A673 (cell line): ENCODE measurements at regions of chr19 and their contacts with region 1.

Region 1: DNA sequence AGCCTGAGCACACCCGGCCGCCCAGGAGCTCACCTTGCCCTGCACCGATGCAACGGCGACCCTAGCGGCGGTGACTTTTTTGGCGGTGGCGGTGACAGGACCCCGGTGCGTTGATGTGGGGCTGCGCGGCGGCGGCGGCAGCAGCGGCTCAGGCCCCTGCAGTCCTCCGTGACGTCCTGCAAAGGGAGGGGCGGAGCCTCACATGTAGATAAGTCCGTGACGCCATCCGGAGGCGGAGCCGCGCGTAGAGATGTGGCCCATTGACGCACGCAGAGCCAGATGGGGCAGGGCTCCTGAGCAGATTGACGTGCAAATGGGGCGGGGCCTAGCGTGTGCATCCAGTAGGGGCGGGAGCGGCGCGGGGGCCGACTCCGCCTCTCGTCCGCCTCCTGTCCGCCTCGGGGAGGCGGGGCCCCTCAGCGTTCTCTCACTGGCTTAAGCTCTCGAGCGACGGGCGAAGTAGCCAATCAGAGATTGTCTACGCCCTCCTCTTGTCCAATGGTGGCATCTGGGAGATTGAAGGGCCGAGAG is at the start of gene RAB3A:
- DNase-seq: peak; percentile 100
- H3K4me3 ChIP-seq: peak within 1 kb of the TSS; percentile 60
- H3K27ac ChIP-seq: peak within 1 kb of the TSS; percentile 86
- H3K4me1 ChIP-seq: peaks cover 12% of the 10 kb centered on the region
- H3K27me3 ChIP-seq: no peaks in the 10 kb centered on the region
- CTCF ChIP-seq: no peak
- total RNA-seq, gene RAB3A: 2.9 and 4.2 TPM in 2 replicates

Region 2: GRCh38 chr19:17035842-17036424 is 1168.0 kb before region 1 on chr19:
- CTCF ChIA-PET with region 1: interaction called, 14 read pairs
- POLR2A ChIA-PET with region 1: no interaction called
- intact Hi-C with region 1: no loop called
- DNase-seq: peak; percentile 55
- H3K4me3 ChIP-seq: no peak overlapping the region
- H3K27ac ChIP-seq: no peak overlapping the region
- H3K4me1 ChIP-seq: no peaks in the 10 kb centered on the region
- H3K27me3 ChIP-seq: peaks cover 4% of the 10 kb centered on the region
- CTCF ChIP-seq: no peak

Region 3: GRCh38 chr19:18251587-18252369 is 47.9 kb after region 1 on chr19:
- CTCF ChIA-PET with region 1: interaction called, 45 read pairs
- POLR2A ChIA-PET with region 1: no interaction called
- intact Hi-C with region 1: loop called (anchors 2 kb)
- DNase-seq: peak; percentile 80
- H3K4me3 ChIP-seq: no peak overlapping the region
- H3K27ac ChIP-seq: no peak overlapping the region
- H3K4me1 ChIP-seq: no peaks in the 10 kb centered on the region
- H3K27me3 ChIP-seq: peaks cover 6% of the 10 kb centered on the region
- CTCF ChIP-seq: peak; percentile 98

Region 4: GRCh38 chr19:18322759-18323460 is 119.0 kb after region 1 on chr19 and contains the start of gene LSM4:
- CTCF ChIA-PET with region 1: no interaction called
- POLR2A ChIA-PET with region 1: no interaction called
- intact Hi-C with region 1: loop called (anchors 5 kb)
- DNase-seq: peak; percentile 99
- H3K4me3 ChIP-seq: peak within 1 kb of the TSS; percentile 70
- H3K27ac ChIP-seq: peak within 1 kb of the TSS; percentile 92
- H3K4me1 ChIP-seq: peaks cover 11% of the 10 kb centered on the region
- H3K27me3 ChIP-seq: no peaks in the 10 kb centered on the region
- CTCF ChIP-seq: no peak
- total RNA-seq, gene LSM4: 252 and 262 TPM in 2 replicates

Region 5: DNA sequence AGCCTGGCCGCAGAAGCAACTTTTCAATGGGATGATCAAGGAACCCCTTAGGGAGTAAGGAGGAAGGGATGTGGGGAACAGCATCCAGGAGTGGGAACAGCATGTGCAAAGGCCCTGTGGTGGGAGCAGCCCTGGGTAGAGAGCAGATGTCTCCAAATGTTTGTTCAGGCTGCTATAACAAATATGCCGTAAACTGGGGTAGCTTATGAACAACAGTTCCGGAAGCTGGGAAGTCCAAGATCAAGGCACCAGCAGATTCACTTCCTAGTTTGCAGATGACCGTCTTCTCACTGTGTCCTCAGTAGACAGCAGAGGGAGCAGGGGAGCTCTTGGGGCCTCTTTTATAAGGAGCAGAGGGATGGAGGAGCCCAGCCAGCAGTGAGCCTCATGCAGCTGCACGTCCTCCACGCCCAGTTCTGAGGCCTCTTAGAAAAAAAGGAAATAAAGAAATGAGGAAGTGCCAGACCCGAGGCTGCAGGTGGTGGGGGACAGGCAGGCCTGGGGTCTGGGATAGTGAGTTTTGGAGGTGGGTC is 197.7 kb after region 1 on chr19:
- CTCF ChIA-PET with region 1: interaction called, 14 read pairs
- POLR2A ChIA-PET with region 1: no interaction called
- intact Hi-C with region 1: no loop called
- DNase-seq: peak; percentile 64
- H3K4me3 ChIP-seq: no peak overlapping the region
- H3K27ac ChIP-seq: no peak overlapping the region
- H3K4me1 ChIP-seq: no peaks in the 10 kb centered on the region
- H3K27me3 ChIP-seq: no peaks in the 10 kb centered on the region
- CTCF ChIP-seq: 0 out of 2 replicates have a peak, but pooled peaks have one; percentile 35

Region 6: DNA sequence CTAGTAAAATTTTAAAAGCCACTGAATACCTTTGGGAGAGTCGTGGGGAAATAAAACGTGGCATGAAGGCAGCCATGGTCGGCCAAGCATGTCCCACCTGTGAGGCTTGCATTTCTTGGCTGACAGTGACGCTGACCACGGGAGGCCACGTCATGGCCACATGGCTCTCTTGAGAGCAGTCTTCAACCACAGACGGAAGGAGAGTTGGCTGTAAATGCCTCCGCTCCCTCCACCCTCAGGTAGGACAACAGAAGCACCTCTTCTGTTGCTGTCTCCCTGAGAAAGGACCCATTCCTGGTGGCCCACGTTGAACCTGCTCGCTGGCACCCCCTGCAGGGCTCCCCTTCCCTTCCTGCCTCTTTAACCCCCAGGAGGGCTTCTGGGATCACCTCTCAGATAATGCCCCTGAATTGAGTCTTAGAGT is 204.1 kb after region 1 on chr19:
- CTCF ChIA-PET with region 1: interaction called, 14 read pairs
- POLR2A ChIA-PET with region 1: no interaction called
- intact Hi-C with region 1: no loop called
- DNase-seq: peak; percentile 56
- H3K4me3 ChIP-seq: no peak overlapping the region
- H3K27ac ChIP-seq: no peak overlapping the region
- H3K4me1 ChIP-seq: no peaks in the 10 kb centered on the region
- H3K27me3 ChIP-seq: no peaks in the 10 kb centered on the region
- CTCF ChIP-seq: peak; percentile 72

Region 7: DNA sequence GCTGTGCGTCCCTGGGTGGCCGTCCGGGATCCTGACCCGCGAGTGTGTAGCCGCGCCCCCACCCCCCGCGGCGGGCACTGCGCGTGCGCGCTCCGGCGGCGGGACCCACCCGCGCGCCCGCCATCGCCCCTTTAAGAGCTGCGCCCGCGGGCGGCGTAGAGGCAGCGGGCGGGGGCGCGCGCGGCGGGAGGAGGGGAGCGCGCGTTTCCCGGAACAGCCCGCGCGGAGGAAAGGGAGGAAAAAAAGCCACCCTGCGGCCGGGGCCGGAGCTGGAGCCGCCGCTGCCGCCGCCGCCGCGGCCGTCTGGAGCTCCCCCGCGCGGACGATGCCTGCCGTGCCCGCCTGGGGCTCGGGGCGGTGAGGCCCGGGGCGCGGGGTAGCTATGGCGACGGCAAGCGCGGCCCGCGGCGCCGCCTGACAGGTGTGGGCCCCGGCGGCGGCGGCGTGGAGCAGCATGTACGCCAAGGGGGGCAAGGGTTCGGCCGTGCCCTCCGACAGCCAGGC is 215.3 kb after region 1 on chr19 and contains the start of gene SSBP4:
- CTCF ChIA-PET with region 1: no interaction called
- POLR2A ChIA-PET with region 1: no interaction called
- intact Hi-C with region 1: loop called (anchors 5 kb)
- DNase-seq: peak; percentile 93
- H3K4me3 ChIP-seq: peak within 1 kb of the TSS; percentile 88
- H3K27ac ChIP-seq: peak within 1 kb of the TSS; percentile 99
- H3K4me1 ChIP-seq: peaks cover 84% of the 10 kb centered on the region
- H3K27me3 ChIP-seq: no peaks in the 10 kb centered on the region
- CTCF ChIP-seq: no peak; the same call in 1 of the 2 replicates
- total RNA-seq, gene SSBP4: 242 and 248 TPM in 2 replicates